T-cell (primary cell): ENCODE measurements at regions of chr16 and their contacts with region 1.

Region 1: GRCh38 chr16:68264128-68265077 is at the start of gene SLC7A6:
- DNase-seq: peak; percentile 42 to 92 (median 73)
- ATAC-seq: peak; percentile 81 to 86 (median 82)
- H3K4me3 ChIP-seq: peak within 1 kb of the TSS; percentile 82 to 86
- H3K4me3 Mint-ChIP-seq: peak within 1 kb of the TSS; percentile 91 to 96 (median 95)
- H3K27ac ChIP-seq: peak within 1 kb of the TSS; percentile 90
- H3K27ac Mint-ChIP-seq: peak within 1 kb of the TSS; percentile 97
- H3K4me1 ChIP-seq: peaks cover 27 to 64% of the 10 kb centered on the region in 2 experiments
- H3K4me1 Mint-ChIP-seq: peaks cover 52 to 62% (median 55%) of the 10 kb centered on the region in 3 donors
- H3K27me3 ChIP-seq: no peaks in the 10 kb centered on the region
- H3K27me3 Mint-ChIP-seq: no peaks in the 10 kb centered on the region
- total RNA-seq, gene SLC7A6: 146 to 216 (median 185) TPM

Region 2: GRCh38 chr16:68275611-68276191 is 11.3 kb after region 1 on chr16:
- CTCF ChIA-PET with region 1: interaction called, 5 to 14 read pairs
- POLR2A ChIA-PET with region 1: interaction called, 3 to 8 read pairs
- DNase-seq: peak; percentile 27 to 81 (median 49)
- ATAC-seq: peak; percentile 81 to 88 (median 88)
- H3K4me3 ChIP-seq: peak overlapping the region in 1 of 2 donors; percentile 0
- H3K4me3 Mint-ChIP-seq: peak overlapping the region; percentile 46 to 80 (median 55)
- H3K27ac ChIP-seq: peak overlapping the region; percentile 75
- H3K27ac Mint-ChIP-seq: peak overlapping the region; percentile 98 to 100
- H3K4me1 ChIP-seq: peaks cover 75 to 94% of the 10 kb centered on the region in 2 experiments
- H3K4me1 Mint-ChIP-seq: peaks cover 70 to 76% (median 72%) of the 10 kb centered on the region in 3 donors
- H3K27me3 ChIP-seq: no peaks in the 10 kb centered on the region
- H3K27me3 Mint-ChIP-seq: no peaks in the 10 kb centered on the region

Region 3: GRCh38 chr16:68297908-68298307 is 33.5 kb after region 1 on chr16:
- CTCF ChIA-PET with region 1: interaction called, 3 to 6 read pairs
- POLR2A ChIA-PET with region 1: interaction called in 1 of 2 experiments, 11 read pairs
- DNase-seq: no peak
- ATAC-seq: no peak
- H3K4me3 ChIP-seq: no peak overlapping the region
- H3K4me3 Mint-ChIP-seq: no peak overlapping the region
- H3K27ac ChIP-seq: no peak overlapping the region
- H3K27ac Mint-ChIP-seq: peak overlapping the region; percentile 54 to 75
- H3K4me1 ChIP-seq: peaks cover 2 to 8% of the 10 kb centered on the region in 2 experiments
- H3K4me1 Mint-ChIP-seq: peaks cover 33 to 65% (median 40%) of the 10 kb centered on the region in 3 donors
- H3K27me3 ChIP-seq: no peaks in the 10 kb centered on the region
- H3K27me3 Mint-ChIP-seq: no peaks in the 10 kb centered on the region

Region 4: GRCh38 chr16:68310761-68311511 is 46.5 kb after region 1 on chr16 and contains the starts of genes PRMT7 and SLC7A6OS:
- CTCF ChIA-PET with region 1: interaction called, 6 to 73 read pairs
- POLR2A ChIA-PET with region 1: interaction called in 1 of 2 experiments, 5 read pairs
- DNase-seq: peak; percentile 82 to 96 (median 91)
- ATAC-seq: peak; percentile 97 to 100 (median 98)
- H3K4me3 ChIP-seq: peak within 1 kb of the TSS; percentile 92 to 94
- H3K4me3 Mint-ChIP-seq: peak within 1 kb of the TSS; percentile 95 to 99 (median 98)
- H3K27ac ChIP-seq: peak within 1 kb of the TSS; percentile 64
- H3K27ac Mint-ChIP-seq: peak within 1 kb of the TSS; percentile 97 to 98
- H3K4me1 ChIP-seq: peaks cover 23 to 55% of the 10 kb centered on the region in 2 experiments
- H3K4me1 Mint-ChIP-seq: peaks cover 46 to 61% (median 57%) of the 10 kb centered on the region in 3 donors
- H3K27me3 ChIP-seq: no peaks in the 10 kb centered on the region
- H3K27me3 Mint-ChIP-seq: no peaks in the 10 kb centered on the region
- total RNA-seq, gene PRMT7: 80.1 to 92.4 (median 87.2) TPM
- total RNA-seq, gene SLC7A6OS: 42.5 to 50.3 (median 43.9) TPM

Region 5: DNA sequence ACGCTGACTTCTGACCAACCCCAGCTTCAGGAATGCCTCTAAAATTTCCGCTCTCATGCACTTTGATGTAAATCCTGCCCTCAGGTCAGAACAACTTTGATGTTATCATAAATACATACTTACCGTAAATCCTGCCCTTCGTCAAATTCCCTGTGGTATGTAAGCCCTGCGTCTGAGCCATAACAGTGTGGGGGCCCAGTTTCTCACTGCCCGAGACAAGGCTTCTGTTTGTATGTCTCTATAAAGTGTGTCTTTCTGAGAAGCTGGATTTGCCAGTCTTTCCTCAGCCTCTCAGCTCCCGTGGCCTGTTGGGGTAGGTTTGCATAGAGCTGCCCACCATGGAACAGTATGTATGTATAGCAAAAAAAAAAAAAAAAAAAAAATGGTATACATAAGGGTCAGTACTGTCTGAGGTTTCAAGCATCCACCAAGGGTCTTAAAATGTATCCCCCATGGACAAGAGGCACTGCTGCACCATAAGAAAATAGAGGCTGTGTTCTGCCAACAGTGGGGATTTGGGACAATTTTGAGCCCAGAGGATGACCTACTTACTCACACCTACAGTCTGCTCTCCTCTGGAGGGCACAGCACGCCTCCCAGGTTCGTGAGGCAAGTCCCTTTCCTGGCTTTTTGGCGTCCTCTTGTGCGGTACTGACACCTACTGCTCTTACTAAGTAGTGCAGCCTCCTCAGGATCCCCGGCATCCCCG is 63.9 kb after region 1 on chr16:
- CTCF ChIA-PET with region 1: interaction called, 28 to 71 read pairs
- POLR2A ChIA-PET with region 1: interaction called in 1 of 2 experiments, 3 read pairs
- DNase-seq: peak; percentile 58 to 90 (median 72)
- ATAC-seq: peak; percentile 93 to 99 (median 97)
- H3K4me3 ChIP-seq: no peak overlapping the region
- H3K4me3 Mint-ChIP-seq: no peak overlapping the region
- H3K27ac ChIP-seq: no peak overlapping the region
- H3K27ac Mint-ChIP-seq: no peak overlapping the region
- H3K4me1 ChIP-seq: peaks cover 9 to 11% of the 10 kb centered on the region in 2 experiments
- H3K4me1 Mint-ChIP-seq: peaks cover 14 to 15% (median 15%) of the 10 kb centered on the region in 3 donors
- H3K27me3 ChIP-seq: no peaks in the 10 kb centered on the region
- H3K27me3 Mint-ChIP-seq: no peaks in the 10 kb centered on the region